Heart left ventricle (tissue), 16 donors: ENCODE measurements at regions of chr13 and their contacts with region 1.

Region 1: GRCh38 chr13:102596147-102597028 is at the start of gene TPP2:
- DNase-seq: peak; percentile 99 to 100 (median 100)
- ATAC-seq: peak; percentile 98 to 99 (median 99)
- H3K4me3 ChIP-seq: peak within 1 kb of the TSS; percentile 64 to 97 (median 86)
- H3K27ac ChIP-seq: peak within 1 kb of the TSS; percentile 95 to 100 (median 98)
- H3K4me1 ChIP-seq: peaks cover 0 to 71% (median 38%) of the 10 kb centered on the region in 12 donors
- H3K27me3 ChIP-seq: no peaks in the 10 kb centered on the region
- CTCF ChIP-seq: no peak
- POLR2A ChIP-seq: peak; percentile 47 to 84
- total RNA-seq, gene TPP2: 26.0 to 37.9 (median 32.4) TPM

Region 2: GRCh38 chr13:102369302-102369701 is 227.1 kb before region 1 on chr13:
- intact Hi-C with region 1: no loop called
- DNase-seq: no peak
- ATAC-seq: no peak
- H3K4me3 ChIP-seq: no peak overlapping the region
- H3K27ac ChIP-seq: no peak overlapping the region
- H3K4me1 ChIP-seq: peaks cover 0 to 4% (median 0%) of the 10 kb centered on the region in 12 donors
- H3K27me3 ChIP-seq: peaks cover 0 to 4% (median 0%) of the 10 kb centered on the region in 9 donors
- CTCF ChIP-seq: no peak
- POLR2A ChIP-seq: no peak

Region 3: DNA sequence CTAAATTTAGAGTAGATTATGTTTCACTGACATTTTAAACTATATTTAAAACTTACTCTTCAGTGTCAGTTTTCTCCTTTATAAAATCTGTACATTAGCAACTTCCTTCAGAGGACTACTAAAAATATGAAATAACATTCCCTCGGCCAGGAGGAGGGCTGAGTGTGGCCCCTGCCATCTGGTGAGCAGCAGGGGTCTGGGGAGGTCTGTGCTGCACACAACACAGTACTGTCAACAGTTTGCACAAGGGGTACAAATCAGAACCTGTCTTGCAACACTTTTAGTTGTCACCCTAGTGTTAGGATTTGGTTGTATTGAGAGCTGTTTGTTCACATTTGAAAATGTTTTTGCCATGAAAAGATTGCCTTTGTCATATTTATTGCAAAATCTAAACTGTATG is 49.3 kb after region 1 on chr13:
- intact Hi-C with region 1: loop called in 1 of 10 experiments (anchors 5 kb)
- DNase-seq: no peak
- ATAC-seq: no peak
- H3K4me3 ChIP-seq: no peak overlapping the region
- H3K27ac ChIP-seq: no peak overlapping the region
- H3K4me1 ChIP-seq: peaks cover 0 to 22% (median 0%) of the 10 kb centered on the region in 12 donors
- H3K27me3 ChIP-seq: no peaks in the 10 kb centered on the region
- CTCF ChIP-seq: no peak
- POLR2A ChIP-seq: no peak

Region 4: GRCh38 chr13:102773441-102774215 is 177.2 kb after region 1 on chr13 and contains the start of gene TEX30:
- intact Hi-C with region 1: loop called in 3 of 10 experiments (anchors 2 to 5 kb)
- DNase-seq: peak; percentile 85 to 94 (median 88)
- ATAC-seq: peak; percentile 94 to 100 (median 100)
- H3K4me3 ChIP-seq: peak within 1 kb of the TSS; percentile 51 to 87 (median 81)
- H3K27ac ChIP-seq: peak within 1 kb of the TSS; percentile 45 to 90 (median 82)
- H3K4me1 ChIP-seq: peaks cover 0 to 23% (median 7%) of the 10 kb centered on the region in 12 donors
- H3K27me3 ChIP-seq: no peaks in the 10 kb centered on the region
- CTCF ChIP-seq: peak in 2 of 12 donors; percentile 16 to 17
- POLR2A ChIP-seq: peak in 1 of 2 donors; percentile 90
- total RNA-seq, gene TEX30: 6.0 to 13.7 (median 9.8) TPM

Region 5: DNA sequence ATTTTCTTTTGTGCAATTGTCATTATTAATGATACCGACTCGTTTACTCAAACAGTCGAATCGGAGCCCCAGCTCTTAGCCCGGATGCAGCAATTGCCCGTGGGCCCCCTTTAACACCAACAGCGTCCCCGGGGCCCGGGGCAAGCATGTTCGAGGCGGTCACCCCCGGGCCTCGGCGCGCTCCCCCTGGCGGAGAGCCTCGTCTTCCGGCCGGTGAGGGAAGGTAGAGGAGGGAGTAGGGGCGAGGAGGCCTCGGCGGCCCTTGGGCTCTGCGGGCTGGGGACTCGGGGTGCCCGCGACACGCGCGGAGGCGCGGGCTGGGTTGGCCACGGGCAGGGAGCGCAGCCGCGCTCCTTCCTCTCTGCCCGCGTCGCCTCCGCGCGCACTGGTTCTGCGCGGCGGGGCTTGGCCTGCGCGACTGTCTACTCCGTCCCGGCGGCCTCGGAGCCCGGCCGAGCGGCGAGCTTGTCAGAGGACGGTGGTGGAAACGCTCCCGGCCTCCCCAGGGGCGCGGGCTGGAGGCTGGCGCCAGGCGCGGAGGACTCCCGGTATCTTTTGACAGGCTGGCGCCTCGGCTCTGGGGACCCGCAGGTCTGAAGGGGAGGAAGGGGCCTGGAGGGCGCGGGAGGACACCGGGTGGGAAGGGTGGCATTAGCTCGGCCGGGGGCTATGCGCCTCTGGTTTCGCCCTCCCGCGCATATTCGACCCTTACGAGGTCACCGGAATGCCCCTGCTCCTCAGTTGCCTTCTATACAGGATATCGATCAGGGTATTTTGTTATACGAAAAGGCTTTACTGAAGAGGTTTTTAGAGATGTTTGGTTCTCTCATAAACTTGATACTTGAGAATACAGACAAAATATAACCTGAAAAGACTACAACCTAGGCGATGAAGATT is 204.0 kb after region 1 on chr13:
- intact Hi-C with region 1: loop called in 4 of 10 experiments (anchors 2 to 5 kb)
- DNase-seq: peak; percentile 84 to 90 (median 87)
- ATAC-seq: peak; percentile 66 to 87 (median 82)
- H3K4me3 ChIP-seq: peak overlapping the region; percentile 65 to 95 (median 82)
- H3K27ac ChIP-seq: peak overlapping the region; percentile 72 to 96 (median 91)
- H3K4me1 ChIP-seq: peaks cover 0 to 47% (median 30%) of the 10 kb centered on the region in 12 donors
- H3K27me3 ChIP-seq: peaks cover 0 to 10% (median 0%) of the 10 kb centered on the region in 9 donors
- CTCF ChIP-seq: peak; percentile 70 to 89 (median 82)
- POLR2A ChIP-seq: peak in 1 of 2 donors; percentile 26